Activated CD8-positive, alpha-beta memory T cell treated with anti-CD3 and anti-CD28 coated beads, Interleukin-2, amount 10 ng/mL, durations not matched to agents 7 days and 5 days (primary cell): ENCODE measurements at regions of chr17 and their contacts with region 1.

Region 1: GRCh38 chr17:82781894-82782274 is 30.0 kb downstream of the TBCD start:
- DNase-seq: peak; percentile 90
- ATAC-seq: peak; percentile 100
- H3K4me3 Mint-ChIP-seq: no peak overlapping the region
- H3K27ac Mint-ChIP-seq: peak overlapping the region; percentile 41
- H3K4me1 Mint-ChIP-seq: peaks cover 18% of the 10 kb centered on the region
- H3K27me3 Mint-ChIP-seq: no peaks in the 10 kb centered on the region

Region 2: GRCh38 chr17:82662711-82663261 is 119.1 kb before region 1 on chr17:
- CTCF ChIA-PET with region 1: no interaction called
- DNase-seq: no peak
- ATAC-seq: no peak
- H3K4me3 Mint-ChIP-seq: no peak overlapping the region
- H3K27ac Mint-ChIP-seq: no peak overlapping the region
- H3K4me1 Mint-ChIP-seq: no peaks in the 10 kb centered on the region
- H3K27me3 Mint-ChIP-seq: no peaks in the 10 kb centered on the region

Region 3: DNA sequence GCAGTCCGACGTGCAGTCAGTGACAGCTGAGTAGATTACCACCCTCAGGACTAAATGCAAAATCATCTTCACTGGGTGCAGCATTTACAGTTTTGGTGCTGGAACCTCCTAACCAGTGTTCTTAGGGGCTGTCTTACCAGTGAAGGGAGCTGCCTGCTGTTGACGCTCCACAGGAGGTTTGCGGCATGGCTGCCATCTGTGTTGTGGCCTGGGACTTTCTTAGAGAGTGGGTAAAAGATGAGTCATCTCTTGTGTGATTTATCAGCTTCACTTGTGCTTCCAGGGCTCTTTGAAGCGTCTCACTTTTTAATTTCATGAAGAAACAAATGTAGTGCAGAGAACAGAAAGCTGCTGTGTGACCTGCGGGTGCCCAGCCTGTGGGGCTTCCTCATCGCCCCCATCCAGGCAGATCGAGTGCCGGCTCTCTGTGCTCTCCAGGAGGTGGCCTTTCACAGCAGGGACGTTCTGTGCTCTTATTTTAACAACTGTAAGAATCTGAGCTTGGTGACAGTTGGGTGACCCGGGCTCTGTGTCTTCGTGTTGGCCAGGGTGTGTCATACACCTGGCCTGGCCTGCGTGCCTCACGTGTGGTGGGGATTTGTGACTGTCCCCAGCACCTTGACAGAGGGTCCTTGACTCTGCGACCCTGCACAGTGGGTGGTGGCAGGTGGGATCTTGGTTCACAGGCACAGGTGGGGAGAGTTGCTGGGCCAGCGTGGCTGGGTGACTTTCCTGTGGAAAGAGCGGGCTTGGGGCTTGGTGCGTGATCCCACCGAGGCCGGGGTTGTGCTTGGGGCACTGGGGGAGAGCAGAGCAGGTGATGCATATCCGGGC is 82.3 kb after region 1 on chr17:
- CTCF ChIA-PET with region 1: interaction called, 17 read pairs
- DNase-seq: peak; percentile 98
- ATAC-seq: peak; percentile 92
- H3K4me3 Mint-ChIP-seq: peak overlapping the region; percentile 78
- H3K27ac Mint-ChIP-seq: peak overlapping the region; percentile 99
- H3K4me1 Mint-ChIP-seq: peaks cover 62% of the 10 kb centered on the region
- H3K27me3 Mint-ChIP-seq: no peaks in the 10 kb centered on the region

Region 4: GRCh38 chr17:82881900-82882714 is 100.2 kb after region 1 on chr17:
- CTCF ChIA-PET with region 1: interaction called, 17 read pairs
- DNase-seq: no peak
- ATAC-seq: no peak
- H3K4me3 Mint-ChIP-seq: peak overlapping the region; percentile 71
- H3K27ac Mint-ChIP-seq: peak overlapping the region; percentile 97
- H3K4me1 Mint-ChIP-seq: peaks cover 79% of the 10 kb centered on the region
- H3K27me3 Mint-ChIP-seq: no peaks in the 10 kb centered on the region

Region 5: GRCh38 chr17:82917691-82918345 is 135.9 kb after region 1 on chr17:
- CTCF ChIA-PET with region 1: interaction called, 30 read pairs
- DNase-seq: peak; percentile 58
- ATAC-seq: peak; percentile 74
- H3K4me3 Mint-ChIP-seq: no peak overlapping the region
- H3K27ac Mint-ChIP-seq: no peak overlapping the region
- H3K4me1 Mint-ChIP-seq: peaks cover 22% of the 10 kb centered on the region
- H3K27me3 Mint-ChIP-seq: no peaks in the 10 kb centered on the region

Region 6: GRCh38 chr17:83083323-83084201 is 301.7 kb after region 1 on chr17:
- CTCF ChIA-PET with region 1: interaction called, 16 read pairs
- DNase-seq: peak; percentile 88
- ATAC-seq: peak; percentile 52
- H3K4me3 Mint-ChIP-seq: peak overlapping the region; percentile 75
- H3K27ac Mint-ChIP-seq: peak overlapping the region; percentile 92
- H3K4me1 Mint-ChIP-seq: peaks cover 57% of the 10 kb centered on the region
- H3K27me3 Mint-ChIP-seq: peaks cover 3% of the 10 kb centered on the region

Region 7: DNA sequence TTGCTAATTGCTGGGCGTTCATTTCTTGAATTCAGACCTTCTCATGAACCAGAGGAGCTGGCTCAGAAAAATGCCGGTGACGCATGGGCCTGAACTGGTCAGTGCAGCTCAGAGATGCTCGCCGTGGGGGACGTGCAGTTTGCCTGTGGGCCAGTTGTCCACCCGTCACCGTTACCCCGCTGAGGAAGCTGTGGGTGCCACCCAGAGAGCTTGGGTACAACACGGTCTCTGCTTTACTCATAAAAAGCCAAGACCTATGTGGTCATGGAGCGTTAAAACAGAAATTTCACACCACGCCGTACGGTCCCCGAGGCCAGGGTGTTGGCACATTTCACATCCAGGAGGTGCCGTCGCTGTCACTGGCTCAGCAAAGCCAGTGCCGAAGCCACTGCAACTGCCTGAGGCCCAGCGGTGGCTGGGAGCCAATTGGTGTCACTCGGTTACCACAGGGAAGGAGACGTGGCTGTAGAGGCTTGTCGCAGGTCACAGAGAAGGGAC is 418.4 kb after region 1 on chr17:
- CTCF ChIA-PET with region 1: interaction called, 37 read pairs
- DNase-seq: peak; percentile 93
- ATAC-seq: peak; percentile 78
- H3K4me3 Mint-ChIP-seq: peak overlapping the region; percentile 74
- H3K27ac Mint-ChIP-seq: peak overlapping the region; percentile 100
- H3K4me1 Mint-ChIP-seq: peaks cover 69% of the 10 kb centered on the region
- H3K27me3 Mint-ChIP-seq: no peaks in the 10 kb centered on the region